H1 (cell line): ENCODE measurements at regions of chr5 and their contacts with region 1.

Region 1: GRCh38 chr5:36708996-36709395 is 102.6 kb downstream of the SLC1A3 start:
- DNase-seq: no peak
- H3K4me3 ChIP-seq: no peak overlapping the region
- H3K27ac ChIP-seq: no peak overlapping the region
- H3K4me1 ChIP-seq: no peaks in the 10 kb centered on the region
- H3K27me3 ChIP-seq: no peaks in the 10 kb centered on the region
- CTCF ChIP-seq: peak in 2 of 3 experiments; percentile 15 to 45; a peak in 2 of 4 replicates
- EP300 ChIP-seq: no peak
- POLR2A ChIP-seq: no peak
- RAD21 ChIP-seq: peak; percentile 46 to 56

Region 2: DNA sequence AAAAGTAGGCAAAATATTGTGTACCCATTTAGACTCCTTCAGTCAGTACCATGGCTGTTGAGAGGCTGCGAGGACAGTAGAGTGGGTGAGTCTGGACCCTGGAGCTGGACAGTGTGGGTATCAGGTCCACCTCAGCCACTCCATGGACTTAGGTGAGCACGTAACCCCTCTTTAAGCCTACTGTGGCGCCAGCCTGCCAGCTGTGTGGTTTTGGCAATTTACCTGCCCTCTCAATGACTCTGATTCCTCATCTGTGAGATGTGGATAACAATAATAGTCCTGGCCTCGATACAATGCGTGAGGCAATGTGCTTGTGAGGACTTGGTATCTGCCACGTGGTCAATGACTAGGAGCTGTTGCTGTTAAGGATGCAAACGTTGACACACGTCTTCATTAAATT is 84.7 kb before region 1 on chr5:
- CTCF ChIA-PET with region 1: no interaction called
- POLR2A ChIA-PET with region 1: no interaction called
- DNase-seq: no peak
- H3K4me3 ChIP-seq: no peak overlapping the region
- H3K27ac ChIP-seq: no peak overlapping the region
- H3K4me1 ChIP-seq: peaks cover 0 to 10% (median 5%) of the 10 kb centered on the region in 4 experiments; a peak in 5 of 7 replicates
- H3K27me3 ChIP-seq: no peaks in the 10 kb centered on the region
- CTCF ChIP-seq: no peak
- EP300 ChIP-seq: no peak
- POLR2A ChIP-seq: no peak
- RAD21 ChIP-seq: no peak

Region 3: GRCh38 chr5:36722900-36723299 is 13.9 kb after region 1 on chr5:
- CTCF ChIA-PET with region 1: interaction called, 20 read pairs
- POLR2A ChIA-PET with region 1: no interaction called
- DNase-seq: no peak
- H3K4me3 ChIP-seq: no peak overlapping the region
- H3K27ac ChIP-seq: no peak overlapping the region
- H3K4me1 ChIP-seq: peaks cover 0 to 3% (median 0%) of the 10 kb centered on the region in 4 experiments; a peak in 2 of 7 replicates
- H3K27me3 ChIP-seq: no peaks in the 10 kb centered on the region
- CTCF ChIP-seq: no peak
- EP300 ChIP-seq: no peak
- POLR2A ChIP-seq: no peak
- RAD21 ChIP-seq: no peak

Region 4: DNA sequence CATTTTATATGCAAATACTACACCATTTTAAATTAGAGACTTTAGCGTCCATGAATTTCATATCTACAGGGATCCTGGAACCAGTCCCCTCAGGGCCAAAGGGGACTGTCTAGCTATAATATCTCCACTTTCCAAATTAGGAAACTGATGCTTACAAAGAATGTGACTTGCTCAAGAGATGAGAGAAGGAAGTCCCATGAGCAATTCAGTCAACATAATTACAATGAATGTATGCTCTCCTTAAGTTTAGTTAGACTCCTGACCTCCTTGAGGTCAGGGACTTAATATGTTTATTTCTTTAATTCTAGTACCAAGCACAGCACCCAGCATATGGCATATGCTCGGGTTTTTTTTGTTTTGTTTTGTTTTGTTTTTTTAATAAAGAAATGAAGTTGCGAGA is 191.3 kb after region 1 on chr5:
- CTCF ChIA-PET with region 1: no interaction called
- POLR2A ChIA-PET with region 1: no interaction called
- DNase-seq: no peak
- H3K4me3 ChIP-seq: no peak overlapping the region
- H3K27ac ChIP-seq: no peak overlapping the region
- H3K4me1 ChIP-seq: no peaks in the 10 kb centered on the region
- H3K27me3 ChIP-seq: no peaks in the 10 kb centered on the region
- CTCF ChIP-seq: no peak
- EP300 ChIP-seq: no peak
- POLR2A ChIP-seq: no peak
- RAD21 ChIP-seq: no peak